ENCODE measurements at regions of chr1 and their contacts with region 1.

Region 1: DNA sequence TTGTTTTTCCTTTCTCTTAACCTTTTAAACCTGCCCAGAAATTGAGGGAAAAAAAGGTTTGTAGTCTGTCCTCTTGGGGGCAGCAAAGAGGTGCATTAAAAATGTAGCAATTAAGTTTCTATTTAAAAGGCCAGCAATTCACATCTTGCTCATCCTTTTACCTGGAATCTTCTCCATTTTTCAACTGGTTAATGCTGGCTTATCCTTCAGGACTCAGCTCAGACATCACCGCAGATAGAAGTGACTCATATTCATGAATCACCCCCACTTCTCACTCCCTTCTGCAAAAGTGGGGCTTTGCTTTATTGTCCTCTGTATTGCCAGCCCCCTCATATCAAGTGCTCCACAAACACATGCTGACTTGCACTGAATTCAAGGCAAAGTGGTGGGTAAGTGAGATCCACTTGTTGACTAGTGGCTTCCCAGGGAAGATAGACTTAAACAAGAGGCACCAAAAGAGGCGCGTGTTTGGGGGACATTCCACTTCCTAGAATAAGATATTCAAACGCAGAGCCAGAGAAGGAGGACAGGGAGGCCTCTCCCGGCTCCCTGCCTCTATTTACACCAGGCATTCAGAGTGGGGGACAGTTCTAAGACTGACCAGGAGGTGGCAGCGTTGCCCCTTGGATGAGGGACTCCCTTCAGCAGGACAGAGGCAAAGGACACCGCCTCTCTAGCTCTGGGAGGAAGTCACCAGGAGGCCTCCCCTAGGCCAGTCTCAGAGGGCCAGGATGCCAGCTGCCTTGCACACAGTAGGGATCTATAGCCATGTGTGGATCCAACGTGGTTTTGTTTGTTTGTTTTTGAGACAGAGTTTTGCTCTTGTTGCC is 23.2 kb upstream of the ZNF648 start:
- DNase-seq: peak; percentile 89 to 94 (median 90)
- ATAC-seq: peak; percentile 94
- H3K4me3 ChIP-seq: no peak overlapping the region
- H3K27ac ChIP-seq: peak overlapping the region in 2 of 4 donors; percentile 35 to 49
- H3K4me1 ChIP-seq: peaks cover 13% of the 10 kb centered on the region
- H3K27me3 ChIP-seq: no peaks in the 10 kb centered on the region
- CTCF ChIP-seq: peak; percentile 75 to 97 (median 95)
- POLR2A ChIP-seq: no peak

Region 2: DNA sequence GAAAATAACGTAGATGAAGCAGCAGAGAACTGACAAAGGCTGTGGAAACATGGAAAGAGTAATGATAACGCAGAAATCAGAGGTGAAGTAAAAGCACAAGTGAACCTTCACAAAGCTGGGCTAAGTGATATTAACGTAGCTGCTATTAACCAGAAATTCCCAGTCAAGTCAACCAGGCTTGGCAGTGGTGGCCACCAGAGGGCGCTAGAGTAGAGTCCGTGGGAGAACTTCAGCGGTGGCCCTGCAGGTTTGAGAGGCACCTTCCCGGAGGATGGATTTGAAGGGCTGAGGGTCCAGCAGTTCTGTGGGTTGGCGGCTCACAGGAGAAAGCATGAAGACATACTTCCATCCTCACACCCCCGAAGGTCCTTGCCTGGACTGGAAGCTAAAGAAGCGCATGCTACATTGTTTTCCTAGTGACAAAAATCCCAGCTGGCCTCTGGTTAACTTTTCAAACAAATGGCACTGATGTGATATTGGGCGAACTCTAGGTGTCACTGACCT is 58.5 kb after region 1 on chr1:
- intact Hi-C with region 1: loop called (anchors 10 kb)
- DNase-seq: peak; percentile 91 to 95 (median 92)
- ATAC-seq: peak; percentile 74
- H3K4me3 ChIP-seq: no peak overlapping the region
- H3K27ac ChIP-seq: peak overlapping the region; percentile 84 to 90 (median 86)
- H3K4me1 ChIP-seq: peaks cover 50% of the 10 kb centered on the region
- H3K27me3 ChIP-seq: no peaks in the 10 kb centered on the region
- CTCF ChIP-seq: peak; percentile 65 to 97 (median 95)
- POLR2A ChIP-seq: no peak

Region 3: GRCh38 chr1:182397771-182398393 is 313.2 kb after region 1 on chr1:
- intact Hi-C with region 1: loop called (anchors 5 kb)
- DNase-seq: no peak
- ATAC-seq: no peak
- H3K4me3 ChIP-seq: no peak overlapping the region
- H3K27ac ChIP-seq: peak overlapping the region in 2 of 4 donors; percentile 56 to 69
- H3K4me1 ChIP-seq: peaks cover 11% of the 10 kb centered on the region
- H3K27me3 ChIP-seq: no peaks in the 10 kb centered on the region
- CTCF ChIP-seq: no peak
- POLR2A ChIP-seq: no peak

Region 4: DNA sequence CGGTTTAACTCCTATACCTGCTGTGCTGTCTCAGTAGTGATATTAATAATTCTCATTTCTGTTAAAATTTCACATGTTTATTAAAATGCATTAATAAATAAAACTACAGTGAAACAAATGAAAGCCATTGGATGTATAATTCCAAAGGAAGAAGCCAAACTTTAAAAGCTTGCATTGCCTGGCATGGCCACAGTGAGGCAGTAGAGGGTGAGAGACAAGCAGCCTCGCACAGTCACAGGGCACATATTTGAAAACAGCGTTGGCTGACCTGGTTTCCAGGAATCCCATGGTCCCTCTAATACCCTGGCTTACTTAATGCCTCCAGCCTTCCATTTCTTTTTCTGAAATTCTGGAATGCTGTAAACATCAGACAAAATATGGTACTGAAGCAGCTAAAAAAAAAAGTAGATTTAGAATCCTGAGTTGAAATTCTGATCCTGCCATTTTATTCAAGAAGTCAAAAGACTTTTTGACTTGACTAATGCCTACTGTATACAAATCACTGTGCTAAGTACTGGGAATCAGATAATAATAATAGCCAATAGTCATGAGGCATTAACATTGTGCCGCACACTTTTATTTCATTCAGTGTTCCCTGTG is 511.0 kb after region 1 on chr1:
- intact Hi-C with region 1: loop called (anchors 10 kb)
- DNase-seq: peak; percentile 77 to 85 (median 80)
- ATAC-seq: peak; percentile 88
- H3K4me3 ChIP-seq: no peak overlapping the region
- H3K27ac ChIP-seq: no peak overlapping the region
- H3K4me1 ChIP-seq: peaks cover 7% of the 10 kb centered on the region
- H3K27me3 ChIP-seq: no peaks in the 10 kb centered on the region
- CTCF ChIP-seq: peak; percentile 60 to 96 (median 83)
- POLR2A ChIP-seq: no peak

Region 5: GRCh38 chr1:182789138-182790076 is 704.7 kb after region 1 on chr1 and contains the start of gene NPL:
- intact Hi-C with region 1: loop called (anchors 10 kb)
- DNase-seq: peak; percentile 80 to 85 (median 83)
- ATAC-seq: peak; percentile 96
- H3K4me3 ChIP-seq: peak within 1 kb of the TSS; percentile 28 to 51
- H3K27ac ChIP-seq: peak within 1 kb of the TSS in 2 of 4 donors; percentile 36 to 43
- H3K4me1 ChIP-seq: peaks cover 14% of the 10 kb centered on the region
- H3K27me3 ChIP-seq: no peaks in the 10 kb centered on the region
- CTCF ChIP-seq: peak in 1 of 7 experiments; percentile 0
- POLR2A ChIP-seq: peak; percentile 86 to 93 (median 88)
- total RNA-seq, gene NPL: 0.99 to 2.6 TPM